Panc1 (cell line): ENCODE measurements at regions of chr1 and their contacts with region 1.

Region 1: DNA sequence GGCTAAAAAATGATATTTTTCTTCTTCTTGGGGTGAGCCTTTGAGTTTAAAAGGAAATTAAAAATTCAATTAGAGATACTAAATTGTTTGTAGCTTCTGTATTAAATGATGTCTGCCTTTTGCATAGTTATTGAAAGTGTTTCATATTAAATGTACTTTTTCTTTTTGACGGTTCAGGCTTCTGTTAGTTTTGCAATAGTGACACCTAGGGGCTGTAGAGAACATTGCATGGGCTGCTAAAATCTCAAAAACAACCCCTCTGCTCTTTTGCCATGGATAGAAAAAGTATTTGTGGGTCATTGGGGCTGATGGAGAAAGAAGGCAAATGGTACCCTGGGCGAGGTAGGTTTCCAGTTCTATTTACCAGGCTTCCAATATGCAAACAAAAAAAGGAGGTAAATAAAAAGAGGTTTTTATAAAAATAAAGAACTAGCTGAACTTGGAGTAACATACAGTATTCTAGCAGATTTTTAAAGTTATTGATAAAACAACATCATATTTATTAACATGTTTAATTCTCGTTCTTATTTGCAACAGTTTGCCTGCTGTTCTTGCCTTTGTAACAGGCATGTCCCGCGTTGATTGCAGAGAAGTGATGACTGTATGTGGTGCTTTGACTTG is 115.4 kb upstream of the HOOK1 start:
- DNase-seq: peak; percentile 45
- ATAC-seq: no peak
- H3K4me3 ChIP-seq: no peak overlapping the region
- H3K27ac ChIP-seq: no peak overlapping the region; the same call in 1 of the 2 replicates
- H3K4me1 ChIP-seq: no peaks in the 10 kb centered on the region
- H3K27me3 ChIP-seq: no peaks in the 10 kb centered on the region
- CTCF ChIP-seq: peak; percentile 88

Region 2: DNA sequence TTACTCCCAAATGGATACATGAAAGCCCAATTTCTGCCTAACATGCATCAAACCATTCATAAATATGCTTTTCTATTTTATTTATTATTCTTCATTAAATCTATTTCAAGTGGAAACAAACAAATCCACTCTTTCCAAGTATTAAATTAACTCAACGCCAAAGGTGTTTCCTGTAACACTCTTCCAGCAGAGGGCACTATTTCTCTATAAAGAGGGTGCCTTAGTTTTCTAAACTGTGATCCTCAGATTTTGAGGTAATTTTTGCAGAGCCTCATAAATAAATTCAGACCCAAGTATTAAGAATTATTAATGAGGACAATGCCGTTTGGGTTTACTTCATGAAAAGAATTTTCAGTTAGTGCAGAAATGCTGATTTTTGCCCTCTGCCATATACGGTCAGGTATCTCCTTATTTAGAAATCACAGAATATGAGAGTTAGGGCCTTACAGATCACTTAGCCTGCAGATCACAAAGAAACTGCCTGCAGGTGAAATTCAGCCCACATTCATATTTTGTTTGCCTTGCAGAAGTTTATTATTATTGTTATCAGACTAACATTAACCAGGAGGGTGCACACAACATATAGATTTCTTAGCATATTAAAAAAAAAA is 959.4 kb before region 1 on chr1:
- CTCF ChIA-PET with region 1: no interaction called
- POLR2A ChIA-PET with region 1: no interaction called
- in situ Hi-C with region 1: no loop called
- intact Hi-C with region 1: loop called (anchors 2 kb)
- DNase-seq: peak; percentile 42
- ATAC-seq: peak; percentile 83
- H3K4me3 ChIP-seq: no peak overlapping the region
- H3K27ac ChIP-seq: peak overlapping the region; percentile 34; the same call in 1 of the 2 replicates
- H3K4me1 ChIP-seq: peaks cover 4% of the 10 kb centered on the region
- H3K27me3 ChIP-seq: no peaks in the 10 kb centered on the region
- CTCF ChIP-seq: peak; percentile 74; the same call in 1 of the 2 replicates

Region 3: DNA sequence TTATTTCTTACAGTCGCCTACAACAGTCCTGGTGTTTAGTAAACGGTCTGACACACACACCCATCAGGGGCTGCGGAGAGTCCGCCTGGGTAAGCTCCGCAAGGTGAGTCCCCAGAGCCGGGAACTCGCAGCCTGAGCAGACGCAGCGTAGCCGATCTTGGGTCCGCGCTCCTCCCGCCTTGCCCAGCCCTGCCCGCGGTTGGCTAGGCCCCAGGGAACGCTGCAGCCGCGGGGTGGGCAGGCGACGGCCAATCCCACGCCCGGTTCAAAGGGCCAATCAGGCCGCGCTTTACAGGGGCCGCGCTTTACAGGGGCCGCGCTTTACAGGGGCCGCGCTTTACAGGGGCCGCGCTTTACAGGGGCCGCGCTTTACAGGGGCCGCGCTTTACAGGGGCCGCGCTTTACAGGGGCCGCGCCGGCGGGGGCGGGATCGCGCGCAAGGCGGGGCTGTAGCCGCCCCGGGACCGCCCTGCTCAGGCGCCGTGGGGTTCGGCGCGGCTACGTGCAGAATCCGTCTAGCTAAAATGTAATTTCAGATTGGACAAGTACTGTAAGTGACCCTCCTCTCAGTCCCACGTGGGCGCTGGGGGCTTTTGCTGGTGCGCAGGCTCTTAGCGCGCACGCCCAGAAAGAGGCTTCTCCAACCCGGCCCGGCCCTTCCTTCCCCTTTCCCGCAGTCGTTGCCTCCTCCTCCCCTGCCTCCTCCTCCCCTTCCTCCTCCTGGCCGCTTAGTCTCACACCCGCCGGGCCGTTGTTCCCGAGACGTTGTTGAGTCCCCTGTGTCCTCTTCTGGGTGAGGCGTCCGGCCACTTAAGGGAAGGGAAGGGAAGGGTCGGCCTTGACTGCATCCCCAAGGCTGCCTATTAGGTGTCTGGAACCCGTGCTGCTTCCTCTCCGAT is 402.7 kb before region 1 on chr1 and contains the start of gene FGGY:
- CTCF ChIA-PET with region 1: no interaction called
- POLR2A ChIA-PET with region 1: no interaction called
- in situ Hi-C with region 1: no loop called
- intact Hi-C with region 1: loop called (anchors 5 kb)
- DNase-seq: peak; percentile 89
- ATAC-seq: peak; percentile 97
- H3K4me3 ChIP-seq: peak within 1 kb of the TSS; percentile 85 to 97
- H3K27ac ChIP-seq: peak within 1 kb of the TSS; percentile 100
- H3K4me1 ChIP-seq: peaks cover 16% of the 10 kb centered on the region
- H3K27me3 ChIP-seq: no peaks in the 10 kb centered on the region
- CTCF ChIP-seq: no peak
- total RNA-seq, gene FGGY: 15.5 TPM

Region 4: GRCh38 chr1:59759156-59759925 is 60.0 kb after region 1 on chr1:
- CTCF ChIA-PET with region 1: no interaction called
- POLR2A ChIA-PET with region 1: no interaction called
- in situ Hi-C with region 1: no loop called
- intact Hi-C with region 1: loop called (anchors 5 kb)
- DNase-seq: peak; percentile 70
- ATAC-seq: peak; percentile 95
- H3K4me3 ChIP-seq: peak overlapping the region; percentile 2 to 42; a peak in 3 of 4 replicates
- H3K27ac ChIP-seq: 0 out of 2 replicates have a peak overlapping the region, but pooled peaks have one; percentile 8
- H3K4me1 ChIP-seq: no peaks in the 10 kb centered on the region
- H3K27me3 ChIP-seq: no peaks in the 10 kb centered on the region
- CTCF ChIP-seq: peak; percentile 93

Region 5: DNA sequence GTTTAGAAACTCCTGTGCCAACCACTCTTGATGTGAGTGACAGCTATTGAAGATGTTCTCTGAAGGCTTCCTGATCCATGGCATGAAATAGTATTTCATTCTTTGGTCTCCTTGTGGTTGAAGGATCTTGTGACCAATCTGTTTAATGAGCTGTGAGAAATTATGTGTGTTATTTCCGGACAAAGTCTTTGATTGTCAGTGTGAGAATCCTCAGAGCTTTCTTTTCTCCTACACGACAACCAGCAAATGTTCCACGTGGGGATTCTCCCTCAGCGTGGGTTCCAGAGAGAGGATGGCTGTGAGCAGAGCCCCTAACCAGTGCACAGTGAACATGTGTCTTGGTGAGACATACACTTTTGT is 70.4 kb after region 1 on chr1:
- CTCF ChIA-PET with region 1: no interaction called
- POLR2A ChIA-PET with region 1: no interaction called
- in situ Hi-C with region 1: no loop called
- intact Hi-C with region 1: no loop called
- DNase-seq: no peak
- ATAC-seq: no peak
- H3K4me3 ChIP-seq: no peak overlapping the region
- H3K27ac ChIP-seq: no peak overlapping the region
- H3K4me1 ChIP-seq: no peaks in the 10 kb centered on the region
- H3K27me3 ChIP-seq: no peaks in the 10 kb centered on the region
- CTCF ChIP-seq: no peak